ENCODE measurements at regions of chr13 and their contacts with region 1.

Region 1: DNA sequence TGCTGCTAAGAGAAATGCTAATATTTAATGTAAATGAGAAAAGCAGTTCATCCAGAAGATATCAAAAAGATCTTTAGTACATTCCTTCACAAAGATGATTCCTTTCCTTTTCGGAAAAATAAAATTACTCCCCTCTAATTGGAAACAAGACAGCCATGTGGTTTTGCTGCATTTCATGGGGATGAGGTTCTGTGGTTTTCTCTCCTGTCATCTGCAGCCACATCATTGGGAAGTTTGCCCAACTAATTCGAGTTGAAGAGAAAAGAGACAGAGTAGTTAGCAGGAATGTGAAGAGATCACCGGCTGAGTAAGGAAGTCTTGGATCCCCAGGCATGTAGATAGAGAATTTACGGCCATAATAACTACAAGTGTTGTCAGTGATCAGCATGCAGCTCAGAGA is 122.1 kb downstream of the CYSLTR2 start:
- DNase-seq: no peak
- ATAC-seq: no peak
- H3K4me3 ChIP-seq: no peak overlapping the region
- H3K27ac ChIP-seq: no peak overlapping the region
- H3K4me1 ChIP-seq: no peaks in the 10 kb centered on the region
- H3K27me3 ChIP-seq: peaks cover 0 to 9% (median 0%) of the 10 kb centered on the region in 3 donors
- CTCF ChIP-seq: no peak

Region 2: DNA sequence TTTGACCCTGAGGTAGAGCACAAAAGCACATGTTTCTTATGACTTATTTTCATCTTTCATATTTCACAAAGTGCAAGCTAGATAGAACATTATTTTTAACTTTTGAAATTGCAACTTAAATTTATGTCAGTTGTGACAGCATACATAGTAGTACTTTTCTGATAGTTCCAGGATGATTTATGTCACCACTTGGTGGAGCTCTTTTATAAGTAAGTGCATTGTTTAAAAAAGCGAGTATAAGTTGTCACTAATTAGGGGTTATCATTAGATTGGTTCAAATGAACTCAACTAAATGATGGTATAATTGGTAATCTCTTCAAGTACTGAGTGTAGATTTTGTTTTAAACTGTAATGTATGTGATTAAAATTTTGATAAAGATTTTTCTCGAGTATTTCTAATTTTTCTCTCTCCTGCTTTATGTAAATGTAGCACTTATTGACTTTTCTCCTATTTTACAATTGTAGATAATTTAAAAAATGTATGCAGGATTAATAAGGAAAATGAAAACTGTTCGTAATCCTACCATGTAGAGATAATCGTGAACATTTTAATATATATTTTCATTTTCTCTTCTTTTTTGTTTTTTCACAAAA is 441.2 kb before region 1 on chr13:
- intact Hi-C with region 1: loop called (anchors 5 to 10 kb)
- DNase-seq: no peak
- ATAC-seq: peak in 2 of 4 donors; percentile 64 to 81
- H3K4me3 ChIP-seq: no peak overlapping the region
- H3K27ac ChIP-seq: no peak overlapping the region
- H3K4me1 ChIP-seq: peaks cover 9% of the 10 kb centered on the region
- H3K27me3 ChIP-seq: no peaks in the 10 kb centered on the region
- CTCF ChIP-seq: peak; percentile 66

Region 3: DNA sequence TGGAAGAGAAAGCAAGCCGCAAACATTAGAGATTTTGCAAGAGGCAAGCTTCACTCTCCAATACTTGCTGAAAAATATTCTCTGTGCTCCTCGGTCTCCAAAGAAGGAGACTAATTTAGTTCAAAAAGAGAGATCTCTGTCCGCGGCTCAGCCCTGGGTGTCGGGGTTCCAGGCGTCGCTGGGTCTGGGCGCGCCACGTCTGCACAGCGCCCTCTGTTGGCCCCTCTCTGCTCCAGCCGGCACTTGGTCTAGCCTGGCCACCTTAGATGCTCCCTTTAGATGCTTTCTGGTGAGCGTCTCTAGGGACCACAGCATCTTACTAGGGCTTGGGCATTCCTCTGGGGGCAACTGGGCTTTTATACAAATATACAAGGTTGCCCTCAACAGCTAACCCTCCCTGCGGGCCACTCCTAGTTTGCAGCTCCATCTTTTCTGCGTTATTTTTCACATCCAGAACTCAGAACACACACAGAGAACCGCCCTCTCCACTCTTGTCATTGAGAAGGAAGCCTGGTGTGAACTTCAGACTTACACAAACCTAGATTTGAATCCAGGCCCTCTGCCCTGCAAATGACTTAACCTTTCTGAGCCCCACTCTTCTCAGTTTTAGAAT is 43.7 kb before region 1 on chr13:
- intact Hi-C with region 1: no loop called
- DNase-seq: peak; percentile 37 to 68
- ATAC-seq: peak in 1 of 4 donors; percentile 48
- H3K4me3 ChIP-seq: no peak overlapping the region
- H3K27ac ChIP-seq: no peak overlapping the region
- H3K4me1 ChIP-seq: no peaks in the 10 kb centered on the region
- H3K27me3 ChIP-seq: no peaks in the 10 kb centered on the region
- CTCF ChIP-seq: peak; percentile 41

Region 4: DNA sequence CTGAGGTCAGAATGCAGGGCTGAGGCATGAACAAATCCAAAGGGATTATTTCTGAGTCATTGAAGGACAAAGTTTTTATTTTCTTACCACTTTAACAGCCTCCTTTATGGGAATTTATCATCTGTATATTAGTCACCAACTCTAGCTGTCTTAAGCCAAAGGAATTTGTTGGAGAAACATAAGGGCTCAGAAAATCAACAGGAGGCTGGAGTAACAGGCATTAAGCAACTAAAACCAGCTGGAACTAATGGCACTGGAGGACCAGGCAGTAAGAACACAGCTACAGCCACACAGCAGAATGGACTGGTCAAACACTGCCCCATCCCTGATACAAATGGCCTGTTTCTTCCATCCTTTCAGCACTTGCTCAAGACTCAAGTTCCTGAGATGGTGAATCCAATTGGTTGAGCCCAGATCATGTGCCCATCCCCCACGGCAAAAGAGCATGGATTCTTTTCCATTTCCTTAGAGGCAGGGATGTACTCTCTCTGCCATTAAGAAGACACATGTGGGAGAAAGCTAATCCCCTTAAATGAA is 42.8 kb after region 1 on chr13:
- intact Hi-C with region 1: no loop called
- DNase-seq: no peak
- ATAC-seq: no peak
- H3K4me3 ChIP-seq: no peak overlapping the region
- H3K27ac ChIP-seq: no peak overlapping the region
- H3K4me1 ChIP-seq: no peaks in the 10 kb centered on the region
- H3K27me3 ChIP-seq: no peaks in the 10 kb centered on the region
- CTCF ChIP-seq: no peak

Measured in psoas muscle (tissue), 8 donors.